Right ventricle myocardium superior (tissue), 1 donor: ENCODE measurements at regions of chr11 and their contacts with region 1.

Region 1: DNA sequence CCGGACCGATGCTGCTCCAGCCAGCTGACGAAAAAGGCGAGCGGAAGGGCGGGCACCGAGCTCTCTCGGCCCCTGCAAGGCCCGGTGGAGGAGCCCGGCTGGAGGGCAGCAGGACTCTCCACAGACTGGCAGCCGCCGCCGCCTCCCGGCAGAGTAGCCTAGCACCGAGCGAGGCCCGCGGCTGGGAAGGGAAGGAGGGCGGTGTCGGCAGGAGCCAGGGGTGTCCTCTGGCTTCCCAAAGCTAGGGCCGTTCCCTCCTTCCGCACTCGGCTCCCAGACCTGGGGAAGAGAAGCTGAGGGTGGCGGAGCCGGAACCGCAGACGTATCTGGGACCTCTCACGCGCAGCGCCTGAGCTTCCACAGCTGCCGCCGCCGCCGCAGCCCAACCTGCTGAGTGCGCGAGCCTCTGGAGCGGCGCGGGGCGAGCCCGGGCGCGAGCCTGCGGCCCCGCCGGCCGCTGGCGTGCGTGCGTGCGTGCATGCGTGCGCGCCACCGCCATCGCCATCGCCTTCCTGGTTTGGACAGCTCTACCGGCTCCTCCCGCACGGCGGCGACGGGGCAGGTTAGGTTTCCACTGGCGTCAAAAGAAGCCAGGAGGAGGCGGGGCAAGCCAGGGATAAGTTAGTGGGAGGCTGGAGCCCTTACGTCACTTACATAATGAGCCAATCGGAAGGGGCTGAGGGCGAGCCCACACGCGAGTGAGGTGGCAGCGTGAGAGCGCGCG is at the start of gene RAB6A:
- DNase-seq: peak; percentile 100
- ATAC-seq: peak; percentile 96
- total RNA-seq, gene RAB6A: 97.8 TPM

Region 2: GRCh38 chr11:73779084-73779902 is 18.5 kb after region 1 on chr11:
- intact Hi-C with region 1: loop called (anchors 2 kb)
- DNase-seq: peak; percentile 99
- ATAC-seq: peak; percentile 100